WTC11 (cell line): ENCODE measurements at regions of chr2 and their contacts with region 1.

Region 1: GRCh38 chr2:235746257-235747084 is 252.6 kb downstream of the AGAP1 start:
- DNase-seq: peak; percentile 72
- ATAC-seq: peak; percentile 89
- H3K4me3 Mint-ChIP-seq: no peak overlapping the region
- H3K27ac Mint-ChIP-seq: no peak overlapping the region; the same call in 1 of the 2 replicates
- H3K4me1 Mint-ChIP-seq: peaks cover 27% of the 10 kb centered on the region
- H3K27me3 Mint-ChIP-seq: no peaks in the 10 kb centered on the region
- CTCF ChIP-seq: peak; percentile 67

Region 2: GRCh38 chr2:235500761-235501672 is 245.5 kb before region 1 on chr2:
- CTCF ChIA-PET with region 1: interaction called, 12 read pairs
- POLR2A ChIA-PET with region 1: interaction called, 4 read pairs
- DNase-seq: no peak
- ATAC-seq: 0 out of 2 replicates have a peak, but pooled peaks have one; percentile 7
- H3K4me3 Mint-ChIP-seq: peak overlapping the region; percentile 48
- H3K27ac Mint-ChIP-seq: peak overlapping the region; percentile 94
- H3K4me1 Mint-ChIP-seq: peaks cover 85% of the 10 kb centered on the region
- H3K27me3 Mint-ChIP-seq: peaks cover 3% of the 10 kb centered on the region
- CTCF ChIP-seq: no peak

Region 3: GRCh38 chr2:235639428-235639773 is 107.1 kb before region 1 on chr2:
- CTCF ChIA-PET with region 1: interaction called, 28 read pairs
- POLR2A ChIA-PET with region 1: no interaction called
- DNase-seq: no peak
- ATAC-seq: no peak
- H3K4me3 Mint-ChIP-seq: no peak overlapping the region
- H3K27ac Mint-ChIP-seq: no peak overlapping the region
- H3K4me1 Mint-ChIP-seq: peaks cover 68% of the 10 kb centered on the region
- H3K27me3 Mint-ChIP-seq: no peaks in the 10 kb centered on the region
- CTCF ChIP-seq: no peak

Region 4: GRCh38 chr2:235669269-235669831 is 77.1 kb before region 1 on chr2:
- CTCF ChIA-PET with region 1: interaction called, 16 read pairs
- POLR2A ChIA-PET with region 1: interaction called, 4 read pairs
- DNase-seq: peak; percentile 90
- ATAC-seq: peak; percentile 80
- H3K4me3 Mint-ChIP-seq: peak overlapping the region; percentile 65
- H3K27ac Mint-ChIP-seq: peak overlapping the region; percentile 87; the same call in 1 of the 2 replicates
- H3K4me1 Mint-ChIP-seq: peaks cover 68% of the 10 kb centered on the region
- H3K27me3 Mint-ChIP-seq: peaks cover 14% of the 10 kb centered on the region
- CTCF ChIP-seq: no peak

Region 5: DNA sequence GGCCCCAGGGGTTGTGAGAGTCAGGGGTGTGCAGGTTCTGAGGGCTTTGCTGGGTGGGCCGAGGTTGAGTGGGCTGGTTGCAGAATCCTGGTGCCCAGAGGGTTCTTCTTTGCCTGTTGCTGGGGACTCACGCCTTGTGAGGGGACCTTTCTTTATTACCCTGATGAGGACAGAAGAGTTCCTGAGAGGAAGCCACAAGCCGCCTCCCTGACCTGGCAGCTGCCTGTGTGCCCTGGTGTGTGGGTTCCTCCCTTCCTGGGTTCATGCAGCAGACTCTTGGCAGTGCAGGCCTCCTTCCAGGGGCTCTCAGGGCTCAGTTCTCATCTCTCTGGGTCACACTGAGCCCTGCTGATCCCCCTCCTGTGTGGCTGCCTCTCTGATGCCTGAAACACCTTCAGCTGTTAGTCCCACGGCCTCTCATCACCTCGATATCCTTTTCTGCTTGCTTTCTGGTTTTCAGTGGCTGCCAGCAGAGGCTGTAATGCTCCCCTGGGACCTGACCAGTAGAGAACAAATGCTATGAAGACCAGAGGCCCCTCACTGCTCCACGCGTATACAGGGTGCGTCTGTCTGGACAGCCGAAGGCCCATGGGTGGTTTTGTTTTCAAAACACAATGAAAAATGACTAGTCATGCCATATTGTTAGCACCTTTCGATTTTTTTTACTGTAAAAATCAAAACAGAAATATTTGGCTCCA is 61.3 kb before region 1 on chr2:
- CTCF ChIA-PET with region 1: interaction called, 18 read pairs
- POLR2A ChIA-PET with region 1: no interaction called
- DNase-seq: no peak
- ATAC-seq: no peak
- H3K4me3 Mint-ChIP-seq: no peak overlapping the region
- H3K27ac Mint-ChIP-seq: peak overlapping the region; percentile 64; the same call in 1 of the 2 replicates
- H3K4me1 Mint-ChIP-seq: peaks cover 44% of the 10 kb centered on the region
- H3K27me3 Mint-ChIP-seq: no peaks in the 10 kb centered on the region
- CTCF ChIP-seq: no peak

Region 6: DNA sequence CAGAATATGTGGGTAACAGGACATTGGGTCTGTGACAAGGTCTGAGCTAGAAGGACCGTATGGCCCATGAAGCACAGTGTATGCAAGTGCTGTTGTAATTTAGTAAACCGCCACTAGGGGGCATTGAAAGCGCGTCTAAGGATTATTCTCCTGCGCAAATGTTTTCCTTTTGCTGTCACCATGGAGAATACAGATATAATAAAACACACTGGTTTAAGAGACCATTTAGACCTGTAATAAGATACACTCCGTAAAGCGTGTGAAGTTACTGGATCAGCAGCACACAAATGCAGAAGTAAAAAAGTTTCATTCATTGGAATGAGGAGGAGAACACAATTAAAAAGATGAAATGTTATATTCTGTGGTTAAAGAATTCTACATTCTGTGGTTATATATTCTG is 19.8 kb after region 1 on chr2:
- CTCF ChIA-PET with region 1: interaction called, 17 read pairs
- POLR2A ChIA-PET with region 1: no interaction called
- DNase-seq: peak; percentile 59
- ATAC-seq: peak; percentile 91
- H3K4me3 Mint-ChIP-seq: no peak overlapping the region
- H3K27ac Mint-ChIP-seq: no peak overlapping the region; the same call in 1 of the 2 replicates
- H3K4me1 Mint-ChIP-seq: no peaks in the 10 kb centered on the region
- H3K27me3 Mint-ChIP-seq: no peaks in the 10 kb centered on the region
- CTCF ChIP-seq: peak; percentile 95